ENCODE measurements at regions of chrX and their contacts with region 1.

Region 1: DNA sequence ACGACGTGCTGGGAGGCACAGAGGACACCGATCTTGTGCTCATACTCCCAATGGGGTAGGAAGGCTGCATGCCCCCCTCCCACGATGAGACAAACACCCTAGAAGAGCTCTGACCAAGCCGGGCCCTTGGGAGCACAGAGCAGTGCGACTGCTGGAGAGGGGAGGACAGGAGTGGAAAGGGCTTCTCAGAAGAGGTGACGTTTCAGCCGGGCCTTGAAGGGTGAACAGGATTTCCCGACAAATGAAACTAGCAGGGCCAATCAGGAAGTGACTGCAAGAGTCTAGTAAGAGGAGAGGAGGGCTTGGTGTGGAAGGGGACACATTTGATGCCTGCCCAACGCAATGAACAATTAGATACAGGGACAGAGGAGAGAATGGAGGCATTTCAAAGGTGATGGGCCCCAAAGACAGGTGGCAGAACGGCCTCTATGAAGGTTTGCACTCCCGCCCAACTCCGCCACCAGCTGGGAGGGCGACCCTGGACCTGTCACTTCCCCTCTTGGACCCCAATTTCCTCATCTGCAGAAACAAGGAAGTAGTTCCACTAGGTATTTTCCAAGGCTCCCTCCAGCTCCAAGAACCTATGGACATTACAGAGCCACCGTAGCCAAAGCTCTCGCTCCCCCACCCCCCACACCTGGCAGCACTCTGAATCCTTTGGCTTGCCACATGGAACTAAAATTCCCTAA is 3.9 kb downstream of the HCFC1 start:
- DNase-seq: no peak
- H3K4me3 ChIP-seq: no peak overlapping the region
- H3K27ac ChIP-seq: no peak overlapping the region
- H3K4me1 ChIP-seq: peaks cover 5% of the 10 kb centered on the region
- H3K27me3 ChIP-seq: no peaks in the 10 kb centered on the region
- CTCF ChIP-seq: no peak
- EP300 ChIP-seq: no peak
- POLR2A ChIP-seq: no peak

Region 2: GRCh38 chrX:153927922-153928760 is 39.5 kb before region 1 on chrX:
- intact Hi-C with region 1: loop called in 1 of 4 experiments (anchors 1 kb)
- DNase-seq: peak; percentile 95 to 98 (median 96)
- H3K4me3 ChIP-seq: peak overlapping the region; percentile 69
- H3K27ac ChIP-seq: peak overlapping the region; percentile 64 to 91
- H3K4me1 ChIP-seq: peaks cover 8% of the 10 kb centered on the region
- H3K27me3 ChIP-seq: no peaks in the 10 kb centered on the region
- CTCF ChIP-seq: peak in 1 of 3 donors; percentile 29
- EP300 ChIP-seq: no peak
- POLR2A ChIP-seq: peak; percentile 85

Measured in ovary (tissue), 10 donors.